AG04449 (cell line): ENCODE measurements at regions of chr16 and their contacts with region 1.

Region 1: GRCh38 chr16:4500272-4500671 is 24.1 kb downstream of the HMOX2 start:
- DNase-seq: no peak
- H3K4me3 ChIP-seq: no peak overlapping the region
- CTCF ChIP-seq: no peak

Region 2: DNA sequence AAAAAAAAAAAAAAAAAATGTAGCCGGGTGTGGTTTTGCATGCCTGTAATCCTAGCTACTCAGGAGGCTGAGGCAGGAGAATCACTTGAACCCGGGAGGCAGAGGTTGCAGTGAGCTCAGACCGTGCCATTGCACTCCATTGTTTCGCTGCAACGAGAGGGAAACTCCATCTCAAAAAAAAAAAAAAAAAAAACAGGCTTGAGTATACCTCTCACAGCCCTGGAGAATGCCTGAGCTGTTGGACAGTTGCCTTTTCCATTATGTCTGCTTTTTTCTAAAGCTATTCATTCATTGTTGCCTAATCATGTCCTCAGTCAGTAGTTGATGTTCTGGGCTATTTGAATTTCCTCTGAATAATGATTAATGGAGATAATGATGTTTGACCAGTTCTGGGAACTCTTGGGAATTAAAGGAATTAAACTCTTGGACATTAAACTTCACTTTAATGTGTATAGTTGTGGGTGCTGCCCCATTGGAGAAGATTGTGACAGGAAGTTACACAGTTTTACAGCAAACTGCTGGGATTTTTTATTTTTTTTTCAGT is 12.2 kb before region 1 on chr16:
- CTCF ChIA-PET with region 1: interaction called, 57 read pairs
- POLR2A ChIA-PET with region 1: interaction called, 5 read pairs
- DNase-seq: no peak
- H3K4me3 ChIP-seq: no peak overlapping the region
- CTCF ChIP-seq: no peak

Region 3: GRCh38 chr16:4511441-4512082 is 11.3 kb after region 1 on chr16:
- CTCF ChIA-PET with region 1: interaction called, 57 read pairs
- POLR2A ChIA-PET with region 1: no interaction called
- DNase-seq: no peak
- H3K4me3 ChIP-seq: no peak overlapping the region
- CTCF ChIP-seq: peak; percentile 76